ENCODE measurements at regions of chr7 and their contacts with region 1.

Region 1: GRCh38 chr7:74083117-74083876 is at the start of gene LIMK1:
- DNase-seq: peak; percentile 71 to 90 (median 83)
- ATAC-seq: peak; percentile 98
- H3K4me3 ChIP-seq: peak within 1 kb of the TSS; percentile 44
- H3K4me3 Mint-ChIP-seq: peak within 1 kb of the TSS; percentile 66 to 89 (median 80)
- H3K27ac ChIP-seq: peak within 1 kb of the TSS; percentile 69
- H3K27ac Mint-ChIP-seq: peak within 1 kb of the TSS in 8 of 9 donors; percentile 18 to 89 (median 76)
- H3K4me1 ChIP-seq: peaks cover 7 to 11% of the 10 kb centered on the region in 2 donors
- H3K4me1 Mint-ChIP-seq: peaks cover 0 to 18% (median 9%) of the 10 kb centered on the region in 7 donors
- H3K27me3 ChIP-seq: no peaks in the 10 kb centered on the region
- H3K27me3 Mint-ChIP-seq: no peaks in the 10 kb centered on the region
- total RNA-seq, gene LIMK1: 11.0 to 19.7 (median 14.1) TPM

Region 2: GRCh38 chr7:73842247-73842895 is 240.9 kb before region 1 on chr7 and contains the start of gene METTL27:
- CTCF ChIA-PET with region 1: no interaction called
- POLR2A ChIA-PET with region 1: no interaction called
- intact Hi-C with region 1: loop called in 1 of 2 experiments (anchors 1 kb)
- DNase-seq: peak; percentile 70 to 89 (median 87)
- ATAC-seq: peak; percentile 99
- H3K4me3 ChIP-seq: peak within 1 kb of the TSS; percentile 68
- H3K4me3 Mint-ChIP-seq: peak within 1 kb of the TSS; percentile 82 to 91 (median 89)
- H3K27ac ChIP-seq: peak within 1 kb of the TSS; percentile 73
- H3K27ac Mint-ChIP-seq: peak within 1 kb of the TSS; percentile 53 to 84 (median 77)
- H3K4me1 ChIP-seq: peaks cover 5 to 11% of the 10 kb centered on the region in 2 donors
- H3K4me1 Mint-ChIP-seq: peaks cover 0 to 19% (median 13%) of the 10 kb centered on the region in 7 donors
- H3K27me3 ChIP-seq: no peaks in the 10 kb centered on the region
- H3K27me3 Mint-ChIP-seq: peaks cover 0 to 12% (median 0%) of the 10 kb centered on the region in 5 donors
- total RNA-seq, gene METTL27: 1.8 to 7.4 (median 3.3) TPM

Region 3: DNA sequence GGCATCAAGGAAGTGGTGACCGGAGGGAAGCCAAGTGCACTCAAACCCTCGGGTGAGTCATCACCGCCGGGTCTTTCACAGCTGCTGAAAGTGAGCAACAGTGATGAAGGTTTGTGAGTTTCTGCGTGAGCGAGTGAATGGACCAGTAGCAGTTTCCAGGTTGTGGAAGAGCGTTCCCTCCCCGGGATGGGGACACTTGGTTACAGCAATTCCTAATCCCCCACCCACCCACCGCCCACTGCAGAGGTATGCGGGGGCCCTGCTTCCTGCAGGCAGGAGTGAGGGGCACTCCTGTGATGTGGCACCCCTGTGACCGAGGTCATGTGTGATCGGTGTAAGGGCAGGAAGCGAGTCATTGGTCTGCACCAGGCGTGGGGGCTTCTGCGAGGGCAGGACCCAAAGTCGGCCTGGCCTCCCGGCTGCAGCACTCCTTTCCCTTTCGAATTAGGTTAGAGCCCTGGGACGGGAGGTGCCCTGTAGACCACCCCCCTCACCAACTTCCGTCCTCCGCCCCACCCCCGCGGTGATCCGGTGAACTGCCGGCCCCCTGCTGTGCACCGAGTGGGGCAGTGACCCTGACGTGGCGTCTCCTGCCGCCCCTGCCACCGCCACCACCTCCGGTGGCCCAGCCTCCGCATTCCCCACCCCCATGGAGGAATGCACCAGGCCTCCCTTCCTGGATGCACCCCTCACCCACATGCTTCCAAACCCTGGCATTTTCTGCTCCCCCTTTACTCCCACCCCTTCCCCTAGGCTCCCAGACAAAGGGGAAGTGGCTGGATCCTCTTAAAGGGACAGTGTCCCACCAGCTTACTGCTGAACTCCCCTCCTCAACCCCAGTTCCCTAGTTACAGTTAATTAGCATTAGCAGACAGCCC is 11.2 kb after region 1 on chr7:
- CTCF ChIA-PET with region 1: no interaction called
- POLR2A ChIA-PET with region 1: interaction called, 5 read pairs
- intact Hi-C with region 1: loop called (anchors 1 kb)
- DNase-seq: peak; percentile 21 to 71 (median 29)
- ATAC-seq: peak; percentile 83
- H3K4me3 ChIP-seq: peak overlapping the region; percentile 77
- H3K4me3 Mint-ChIP-seq: peak overlapping the region; percentile 83 to 91 (median 88)
- H3K27ac ChIP-seq: peak overlapping the region; percentile 57
- H3K27ac Mint-ChIP-seq: peak overlapping the region; percentile 83 to 98 (median 90)
- H3K4me1 ChIP-seq: peaks cover 11 to 16% of the 10 kb centered on the region in 2 donors
- H3K4me1 Mint-ChIP-seq: peaks cover 3 to 23% (median 16%) of the 10 kb centered on the region in 7 donors
- H3K27me3 ChIP-seq: no peaks in the 10 kb centered on the region
- H3K27me3 Mint-ChIP-seq: no peaks in the 10 kb centered on the region

Region 4: DNA sequence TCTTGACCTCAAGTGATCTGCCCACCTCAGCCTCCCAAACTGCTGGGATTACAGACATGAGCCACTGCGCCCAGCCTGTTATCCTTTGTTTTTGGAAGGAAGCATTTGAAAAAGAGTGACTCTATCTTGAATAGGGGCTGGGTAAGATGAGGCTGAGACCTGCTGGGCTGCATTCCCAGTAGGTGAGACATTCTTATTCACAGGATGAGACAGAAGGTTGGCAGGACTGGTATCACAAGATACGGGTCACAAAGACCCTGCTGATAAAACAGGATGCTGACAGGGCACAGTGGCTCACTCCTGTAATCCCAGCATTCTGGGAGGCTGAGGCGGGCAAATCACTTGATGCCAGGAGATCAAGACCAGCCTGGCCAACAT is 50.4 kb after region 1 on chr7:
- CTCF ChIA-PET with region 1: no interaction called
- POLR2A ChIA-PET with region 1: no interaction called
- intact Hi-C with region 1: loop called in 1 of 2 experiments (anchors 5 kb)
- DNase-seq: no peak
- ATAC-seq: no peak
- H3K4me3 ChIP-seq: no peak overlapping the region
- H3K4me3 Mint-ChIP-seq: no peak overlapping the region
- H3K27ac ChIP-seq: no peak overlapping the region
- H3K27ac Mint-ChIP-seq: no peak overlapping the region
- H3K4me1 ChIP-seq: no peaks in the 10 kb centered on the region
- H3K4me1 Mint-ChIP-seq: peaks cover 0 to 8% (median 0%) of the 10 kb centered on the region in 7 donors
- H3K27me3 ChIP-seq: no peaks in the 10 kb centered on the region
- H3K27me3 Mint-ChIP-seq: peaks cover 0 to 5% (median 0%) of the 10 kb centered on the region in 5 donors

Region 5: DNA sequence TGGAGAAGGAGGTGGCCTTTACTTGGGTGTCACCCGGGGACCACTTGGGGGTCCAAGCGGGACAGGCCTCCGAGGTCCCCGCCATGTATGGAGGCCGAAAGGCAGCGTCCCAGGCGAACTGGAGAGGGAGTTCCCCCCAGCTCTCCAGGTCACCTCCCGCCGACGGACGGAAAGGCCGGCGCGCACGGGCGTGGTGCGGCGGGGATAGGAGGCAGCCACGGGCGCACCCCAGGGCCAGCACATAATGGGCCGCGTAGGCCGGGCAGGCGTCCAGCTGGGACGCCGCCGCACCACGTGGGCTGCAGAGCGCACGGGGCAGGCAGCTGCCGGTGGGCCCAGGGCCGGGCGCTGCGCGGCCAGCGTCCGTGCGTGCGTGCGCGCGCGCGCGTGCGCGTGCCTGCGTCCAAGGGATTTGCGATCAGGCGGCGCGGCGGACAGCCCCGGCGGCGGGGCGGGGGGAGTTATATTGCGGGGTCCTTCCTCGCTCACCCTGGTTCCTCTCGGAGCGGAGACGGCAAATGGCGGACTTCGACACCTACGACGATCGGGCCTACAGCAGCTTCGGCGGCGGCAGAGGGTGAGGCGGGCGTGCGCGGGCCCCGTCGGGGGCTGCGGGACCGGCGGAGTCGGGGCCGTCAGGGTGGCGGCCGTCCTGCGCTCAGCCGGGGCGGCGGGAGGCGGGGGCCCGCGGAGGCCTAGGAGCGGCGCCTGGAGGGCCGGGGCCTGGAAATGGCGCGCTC is 90.7 kb after region 1 on chr7 and contains the start of gene EIF4H:
- CTCF ChIA-PET with region 1: no interaction called
- POLR2A ChIA-PET with region 1: interaction called, 11 read pairs
- intact Hi-C with region 1: loop called in 1 of 2 experiments (anchors 1 kb)
- DNase-seq: peak; percentile 90 to 97 (median 95)
- ATAC-seq: peak; percentile 97
- H3K4me3 ChIP-seq: peak within 1 kb of the TSS; percentile 87
- H3K4me3 Mint-ChIP-seq: peak within 1 kb of the TSS; percentile 86 to 98 (median 92)
- H3K27ac ChIP-seq: peak within 1 kb of the TSS; percentile 99
- H3K27ac Mint-ChIP-seq: peak within 1 kb of the TSS; percentile 88 to 97 (median 94)
- H3K4me1 ChIP-seq: peaks cover 41 to 43% of the 10 kb centered on the region in 2 donors
- H3K4me1 Mint-ChIP-seq: peaks cover 32 to 57% (median 47%) of the 10 kb centered on the region in 7 donors
- H3K27me3 ChIP-seq: no peaks in the 10 kb centered on the region
- H3K27me3 Mint-ChIP-seq: no peaks in the 10 kb centered on the region
- total RNA-seq, gene EIF4H: 163 to 284 (median 223) TPM

Region 6: GRCh38 chr7:74240482-74240881 is 157.2 kb after region 1 on chr7:
- CTCF ChIA-PET with region 1: no interaction called
- POLR2A ChIA-PET with region 1: no interaction called
- intact Hi-C with region 1: no loop called
- DNase-seq: no peak
- ATAC-seq: no peak
- H3K4me3 ChIP-seq: no peak overlapping the region
- H3K4me3 Mint-ChIP-seq: no peak overlapping the region
- H3K27ac ChIP-seq: no peak overlapping the region
- H3K27ac Mint-ChIP-seq: no peak overlapping the region
- H3K4me1 ChIP-seq: peaks cover 0 to 3% of the 10 kb centered on the region in 2 donors
- H3K4me1 Mint-ChIP-seq: peaks cover 0 to 24% (median 0%) of the 10 kb centered on the region in 7 donors
- H3K27me3 ChIP-seq: no peaks in the 10 kb centered on the region
- H3K27me3 Mint-ChIP-seq: no peaks in the 10 kb centered on the region

Measured in naive thymus-derived CD4-positive, alpha-beta T cell (primary cell).